Activated T-helper 1 cell treated with anti-CD3 and anti-CD28 coated beads, Interleukin-12 subunit alpha, Interleukin-12 subunit beta, Interleukin-2, Interleukin-4 antibody, amounts not matched to agents 30 ng/mL and 10 ng/mL and 1 ng/mL, durations not matched to agents 14 hours and 24 hours and 36 hours (primary cell): ENCODE measurements at regions of chr12 and their contacts with region 1.

Region 1: DNA sequence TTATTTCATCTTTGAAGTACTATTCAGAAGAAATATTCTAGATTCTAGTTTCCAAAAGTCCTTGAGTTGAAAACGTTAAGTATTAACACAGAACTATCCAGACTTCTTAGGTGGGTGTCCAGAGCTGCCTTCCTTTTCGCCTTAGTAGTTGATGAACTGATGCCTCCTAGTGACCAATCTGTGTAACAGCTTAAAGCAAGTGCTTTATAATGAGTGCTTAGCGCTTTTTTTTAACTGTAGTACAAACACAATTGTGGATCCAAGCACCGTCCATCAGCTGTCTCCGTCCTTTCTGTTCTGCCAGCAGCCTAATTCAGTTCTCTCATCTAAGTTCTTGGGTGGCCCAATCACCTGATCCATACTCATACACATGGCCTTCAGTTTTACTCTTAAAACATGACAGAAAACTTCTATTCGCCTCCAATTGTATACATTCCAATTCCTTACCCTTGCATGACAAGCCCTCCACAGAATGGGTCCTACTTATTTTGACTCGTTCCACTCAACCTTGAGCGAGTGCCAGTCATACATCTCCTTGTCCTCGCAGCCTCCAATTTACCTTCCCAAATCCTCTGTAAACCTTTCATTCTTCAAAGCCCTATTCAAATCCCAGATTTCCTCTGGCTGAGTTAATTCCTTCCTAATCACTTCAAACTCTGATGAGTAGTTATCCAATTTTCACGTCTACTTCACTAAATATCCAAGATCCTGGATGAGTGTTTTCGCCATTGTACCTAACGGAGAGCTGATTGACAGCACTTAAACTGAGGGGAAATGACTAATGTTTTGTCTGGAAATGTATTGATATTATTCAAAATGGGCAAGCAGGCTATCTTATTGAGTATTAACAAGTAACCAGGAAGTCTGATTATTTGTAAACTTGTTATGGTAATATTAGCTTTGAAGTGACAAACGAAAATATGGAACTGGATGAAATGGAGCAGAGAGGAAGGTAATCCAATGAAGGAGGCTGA is 5.8 kb upstream of the PHLDA1 start:
- DNase-seq: peak; percentile 26
- H3K4me3 Mint-ChIP-seq: no peak overlapping the region
- H3K27ac Mint-ChIP-seq: peak overlapping the region; percentile 0
- H3K4me1 Mint-ChIP-seq: peaks cover 24% of the 10 kb centered on the region
- H3K27me3 Mint-ChIP-seq: no peaks in the 10 kb centered on the region

Region 2: DNA sequence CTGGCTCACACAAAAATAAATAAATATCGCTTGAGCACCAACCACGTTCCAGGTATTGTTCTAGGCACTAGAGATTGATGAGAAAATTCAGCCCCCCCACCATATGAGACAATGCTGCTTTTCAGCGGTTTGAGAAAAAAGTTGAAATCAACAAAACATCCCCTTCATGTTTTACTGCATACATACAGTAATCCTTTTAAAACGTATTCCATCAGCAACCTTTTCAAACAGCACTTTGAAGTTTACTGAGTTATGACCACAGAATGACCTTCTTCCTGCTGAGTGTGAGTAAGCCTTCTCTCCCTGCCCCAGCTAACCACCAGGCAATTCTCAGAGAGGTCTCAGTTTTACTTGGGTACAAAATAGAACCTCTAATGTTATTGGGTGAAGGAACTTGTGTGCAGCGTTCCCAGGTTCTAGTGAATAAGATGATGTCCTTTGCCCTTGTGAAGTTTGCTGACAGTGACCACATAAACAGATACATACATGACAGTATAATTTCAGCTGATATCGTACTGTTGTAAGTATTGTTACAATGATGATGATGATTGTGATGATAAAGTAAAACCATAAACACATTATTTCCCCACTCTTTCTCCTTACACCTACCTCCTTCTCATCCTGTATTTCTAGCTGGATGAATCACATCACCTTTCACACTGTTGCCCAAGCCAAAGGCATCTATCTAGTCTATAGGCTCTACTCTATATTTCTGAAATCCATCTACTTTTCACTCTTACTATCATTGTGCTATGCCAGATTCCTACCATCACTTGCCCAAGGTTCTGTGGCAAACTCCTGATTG is 401.6 kb before region 1 on chr12:
- intact Hi-C with region 1: loop called (anchors 2 kb)
- DNase-seq: no peak
- H3K4me3 Mint-ChIP-seq: no peak overlapping the region
- H3K27ac Mint-ChIP-seq: peak overlapping the region; percentile 70
- H3K4me1 Mint-ChIP-seq: peaks cover 28% of the 10 kb centered on the region
- H3K27me3 Mint-ChIP-seq: peaks cover 2% of the 10 kb centered on the region

Region 3: DNA sequence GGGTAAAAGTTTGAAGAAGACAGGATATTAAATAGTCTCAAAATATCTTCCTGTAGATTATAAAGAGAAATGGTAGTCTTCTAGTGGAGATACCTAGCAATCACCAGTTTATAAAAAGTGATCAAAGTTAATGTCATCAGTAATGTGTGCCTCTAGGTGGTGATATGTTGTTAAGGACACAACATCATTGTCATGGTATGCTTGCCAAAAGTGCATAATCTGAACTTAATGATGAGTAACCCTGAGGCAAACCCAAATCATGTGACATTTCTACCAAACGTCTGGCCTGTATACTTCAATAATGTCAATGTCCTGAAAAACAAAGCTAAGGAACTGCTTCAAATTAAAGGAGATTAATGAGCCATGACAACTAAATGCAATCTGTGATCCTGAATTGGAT is 220.5 kb before region 1 on chr12:
- intact Hi-C with region 1: loop called (anchors 1 kb)
- DNase-seq: no peak
- H3K4me3 Mint-ChIP-seq: no peak overlapping the region
- H3K27ac Mint-ChIP-seq: no peak overlapping the region
- H3K4me1 Mint-ChIP-seq: peaks cover 29% of the 10 kb centered on the region
- H3K27me3 Mint-ChIP-seq: peaks cover 4% of the 10 kb centered on the region